ENCODE measurements at regions of chr4 and their contacts with region 1.

Region 1: DNA sequence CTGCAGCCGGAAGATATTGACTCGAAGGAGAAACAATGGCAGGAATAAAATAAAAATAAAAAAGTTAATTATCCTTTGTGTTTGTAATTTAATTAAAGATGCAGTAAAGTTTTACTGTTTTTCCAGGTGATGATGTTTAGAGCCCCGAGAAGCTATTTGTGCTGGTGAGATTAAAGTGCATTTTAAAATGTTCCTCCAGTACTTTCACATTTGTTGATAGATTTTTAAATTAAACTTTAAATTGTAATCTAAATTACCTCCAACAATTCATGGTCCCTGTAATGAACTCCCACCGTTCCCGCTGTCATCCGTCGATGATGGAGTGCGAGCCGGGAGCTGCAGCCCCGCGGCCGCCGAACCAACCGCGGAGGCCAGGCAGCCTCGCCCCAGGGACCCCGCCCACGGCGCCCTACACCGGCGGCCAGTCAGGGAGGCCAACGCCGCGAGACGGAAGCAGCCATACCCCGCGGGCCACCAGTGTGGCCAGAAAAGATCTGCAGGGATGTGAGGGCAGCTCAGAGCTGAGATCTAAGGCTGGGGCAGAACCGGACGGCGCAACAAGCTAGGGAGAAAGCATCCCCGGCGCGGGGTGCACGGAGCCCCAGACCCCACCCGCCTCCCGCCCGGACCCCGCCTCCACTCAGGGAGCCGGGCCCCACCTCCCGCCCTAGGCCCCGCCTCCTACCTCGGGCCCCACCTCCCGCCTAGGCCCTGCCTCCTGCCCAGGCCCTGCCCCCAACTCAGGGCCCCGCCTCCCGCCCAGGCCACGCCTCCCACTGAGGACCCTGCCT is 104.0 kb downstream of the FAM53A start:
- DNase-seq: peak in 4 of 5 donors; percentile 90 to 92 (median 91)
- H3K4me3 ChIP-seq: peak overlapping the region; percentile 29 to 91
- H3K4me3 Mint-ChIP-seq: peak overlapping the region; percentile 72 to 83 (median 78)
- H3K27ac ChIP-seq: peak overlapping the region; percentile 74
- H3K27ac Mint-ChIP-seq: peak overlapping the region; percentile 52 to 85 (median 70)
- H3K4me1 ChIP-seq: peaks cover 6% of the 10 kb centered on the region
- H3K4me1 Mint-ChIP-seq: peaks cover 0 to 7% (median 4%) of the 10 kb centered on the region in 4 donors
- H3K27me3 ChIP-seq: no peaks in the 10 kb centered on the region
- H3K27me3 Mint-ChIP-seq: no peaks in the 10 kb centered on the region

Region 2: GRCh38 chr4:1266881-1267763 is 313.0 kb before region 1 on chr4:
- CTCF ChIA-PET with region 1: no interaction called
- POLR2A ChIA-PET with region 1: no interaction called
- intact Hi-C with region 1: no loop called
- DNase-seq: peak in 2 of 5 donors; percentile 25 to 36
- H3K4me3 ChIP-seq: peak overlapping the region in 1 of 2 donors; percentile 62
- H3K4me3 Mint-ChIP-seq: peak overlapping the region; percentile 75 to 90 (median 88)
- H3K27ac ChIP-seq: peak overlapping the region; percentile 63
- H3K27ac Mint-ChIP-seq: peak overlapping the region; percentile 94 to 100 (median 95)
- H3K4me1 ChIP-seq: peaks cover 12% of the 10 kb centered on the region
- H3K4me1 Mint-ChIP-seq: peaks cover 9 to 19% (median 12%) of the 10 kb centered on the region in 4 donors
- H3K27me3 ChIP-seq: no peaks in the 10 kb centered on the region
- H3K27me3 Mint-ChIP-seq: no peaks in the 10 kb centered on the region

Region 3: GRCh38 chr4:1683736-1684505 is 103.8 kb after region 1 on chr4 and contains the start of gene FAM53A:
- CTCF ChIA-PET with region 1: no interaction called
- POLR2A ChIA-PET with region 1: interaction called, 5 read pairs
- intact Hi-C with region 1: loop called (anchors 1 kb)
- DNase-seq: peak; percentile 57 to 92 (median 90)
- H3K4me3 ChIP-seq: peak within 1 kb of the TSS; percentile 52 to 58
- H3K4me3 Mint-ChIP-seq: peak within 1 kb of the TSS; percentile 88 to 93 (median 91)
- H3K27ac ChIP-seq: peak within 1 kb of the TSS; percentile 52
- H3K27ac Mint-ChIP-seq: peak within 1 kb of the TSS; percentile 89 to 96 (median 95)
- H3K4me1 ChIP-seq: peaks cover 7% of the 10 kb centered on the region
- H3K4me1 Mint-ChIP-seq: peaks cover 9 to 16% (median 11%) of the 10 kb centered on the region in 4 donors
- H3K27me3 ChIP-seq: no peaks in the 10 kb centered on the region
- H3K27me3 Mint-ChIP-seq: no peaks in the 10 kb centered on the region
- total RNA-seq, gene FAM53A: 0.89 to 2.2 TPM

Measured in CD4-positive, alpha-beta memory T cell (primary cell).